H1 (cell line): ENCODE measurements at regions of chr20 and their contacts with region 1.

Region 1: DNA sequence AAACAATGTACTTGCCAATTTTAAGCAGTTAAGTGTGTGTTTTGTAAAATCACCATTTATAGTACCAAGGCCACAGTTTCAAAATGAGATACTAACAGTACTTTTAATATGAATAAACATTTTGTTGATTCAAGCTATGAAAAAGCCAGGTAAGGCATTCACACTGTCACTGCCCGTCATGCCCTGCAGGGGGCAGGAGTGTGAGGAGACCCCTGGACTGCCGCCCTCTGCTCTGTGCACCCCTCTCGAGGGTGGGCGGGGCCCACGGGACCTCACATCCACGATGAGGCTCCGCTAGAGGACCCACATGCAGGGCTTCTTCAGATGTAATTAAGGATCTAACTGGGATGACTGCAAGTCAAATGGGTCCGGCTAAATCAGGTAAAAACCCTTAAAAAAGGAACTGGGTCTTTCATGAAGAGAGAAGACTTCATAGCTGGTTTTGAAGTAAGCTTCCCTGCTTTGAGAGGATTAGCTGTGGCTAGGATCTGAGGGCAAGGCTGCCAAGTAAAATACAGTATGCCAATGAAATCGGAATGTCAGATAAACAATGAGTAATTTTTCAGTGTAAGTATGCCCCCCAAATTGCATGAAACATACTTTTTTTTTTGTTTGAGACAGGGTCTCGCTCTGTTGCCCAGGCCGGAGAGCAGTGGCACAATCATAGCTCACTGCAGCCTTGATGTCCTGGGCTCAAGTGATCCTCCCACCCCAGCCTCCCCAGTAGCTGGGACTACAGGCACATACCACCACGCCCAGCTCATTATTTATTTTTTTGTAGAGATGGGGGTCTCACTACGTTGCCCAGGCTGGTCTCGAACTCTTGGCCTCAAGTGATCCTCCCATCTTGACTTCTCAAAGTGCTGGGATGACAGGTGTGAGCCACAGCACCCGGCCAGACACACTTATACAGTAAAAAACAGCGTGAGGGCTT is 18.7 kb downstream of the DIDO1 start:
- DNase-seq: no peak
- H3K4me3 ChIP-seq: no peak overlapping the region
- H3K27ac ChIP-seq: no peak overlapping the region
- H3K4me1 ChIP-seq: no peaks in the 10 kb centered on the region; a peak in 2 of 7 replicates
- H3K27me3 ChIP-seq: no peaks in the 10 kb centered on the region
- CTCF ChIP-seq: peak; percentile 42 to 81 (median 73); a peak in 3 of 4 replicates
- EP300 ChIP-seq: no peak
- POLR2A ChIP-seq: no peak
- RAD21 ChIP-seq: peak; percentile 47 to 52

Region 2: GRCh38 chr20:62887147-62887859 is 20.3 kb before region 1 on chr20:
- CTCF ChIA-PET with region 1: interaction called, 13 read pairs
- POLR2A ChIA-PET with region 1: interaction called, 88 read pairs
- DNase-seq: no peak
- H3K4me3 ChIP-seq: no peak overlapping the region
- H3K27ac ChIP-seq: no peak overlapping the region
- H3K4me1 ChIP-seq: peaks cover 0 to 19% (median 9%) of the 10 kb centered on the region in 4 experiments; a peak in 5 of 7 replicates
- H3K27me3 ChIP-seq: no peaks in the 10 kb centered on the region
- CTCF ChIP-seq: no peak
- EP300 ChIP-seq: no peak
- POLR2A ChIP-seq: no peak
- RAD21 ChIP-seq: no peak

Region 3: DNA sequence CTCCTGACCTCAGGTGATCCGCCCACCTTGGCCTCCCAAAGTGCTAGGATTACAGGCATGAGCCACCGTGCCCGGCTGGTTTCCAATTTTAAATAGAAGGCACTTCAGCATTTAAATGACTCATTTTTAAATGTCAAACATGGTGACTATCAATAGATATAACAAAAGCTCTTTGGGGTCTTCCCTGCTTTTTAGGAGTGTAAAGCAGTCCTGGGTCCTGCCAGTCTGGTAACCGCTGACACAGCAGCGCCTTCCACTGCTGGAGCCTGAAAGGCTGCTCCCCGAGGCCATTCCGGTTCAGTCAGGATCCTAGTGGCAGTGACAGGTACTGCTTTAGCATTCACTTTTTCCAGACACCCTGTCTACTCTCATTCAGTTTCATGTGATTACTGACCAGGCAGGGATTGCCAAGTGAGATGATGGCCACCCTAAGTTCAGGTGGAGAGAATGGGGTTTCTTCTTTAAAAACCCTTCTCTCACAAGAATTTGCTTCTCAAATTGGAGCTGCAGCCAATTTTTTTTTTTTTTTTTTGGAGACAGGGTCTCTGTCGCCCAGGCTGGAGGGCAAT is 13.6 kb after region 1 on chr20:
- CTCF ChIA-PET with region 1: interaction called, 58 read pairs
- POLR2A ChIA-PET with region 1: interaction called, 156 read pairs
- DNase-seq: no peak
- H3K4me3 ChIP-seq: no peak overlapping the region
- H3K27ac ChIP-seq: no peak overlapping the region
- H3K4me1 ChIP-seq: peaks cover 12 to 50% (median 41%) of the 10 kb centered on the region in 4 experiments; a peak in 6 of 7 replicates
- H3K27me3 ChIP-seq: no peaks in the 10 kb centered on the region
- CTCF ChIP-seq: peak; percentile 52 to 72 (median 71)
- EP300 ChIP-seq: no peak
- POLR2A ChIP-seq: no peak
- RAD21 ChIP-seq: peak; percentile 28 to 46; a peak in 2 of 4 replicates

Region 4: GRCh38 chr20:62937366-62938104 is 29.9 kb after region 1 on chr20:
- CTCF ChIA-PET with region 1: interaction called, 19 read pairs
- POLR2A ChIA-PET with region 1: interaction called, 363 read pairs
- DNase-seq: peak; percentile 91 to 96
- H3K4me3 ChIP-seq: peak overlapping the region; percentile 89 to 98 (median 94)
- H3K27ac ChIP-seq: peak overlapping the region; percentile 95
- H3K4me1 ChIP-seq: peaks cover 3 to 21% (median 11%) of the 10 kb centered on the region in 4 experiments
- H3K27me3 ChIP-seq: no peaks in the 10 kb centered on the region
- CTCF ChIP-seq: no peak
- EP300 ChIP-seq: no peak
- POLR2A ChIP-seq: peak; percentile 92 to 95; a peak in 2 of 3 replicates
- RAD21 ChIP-seq: no peak

Region 5: DNA sequence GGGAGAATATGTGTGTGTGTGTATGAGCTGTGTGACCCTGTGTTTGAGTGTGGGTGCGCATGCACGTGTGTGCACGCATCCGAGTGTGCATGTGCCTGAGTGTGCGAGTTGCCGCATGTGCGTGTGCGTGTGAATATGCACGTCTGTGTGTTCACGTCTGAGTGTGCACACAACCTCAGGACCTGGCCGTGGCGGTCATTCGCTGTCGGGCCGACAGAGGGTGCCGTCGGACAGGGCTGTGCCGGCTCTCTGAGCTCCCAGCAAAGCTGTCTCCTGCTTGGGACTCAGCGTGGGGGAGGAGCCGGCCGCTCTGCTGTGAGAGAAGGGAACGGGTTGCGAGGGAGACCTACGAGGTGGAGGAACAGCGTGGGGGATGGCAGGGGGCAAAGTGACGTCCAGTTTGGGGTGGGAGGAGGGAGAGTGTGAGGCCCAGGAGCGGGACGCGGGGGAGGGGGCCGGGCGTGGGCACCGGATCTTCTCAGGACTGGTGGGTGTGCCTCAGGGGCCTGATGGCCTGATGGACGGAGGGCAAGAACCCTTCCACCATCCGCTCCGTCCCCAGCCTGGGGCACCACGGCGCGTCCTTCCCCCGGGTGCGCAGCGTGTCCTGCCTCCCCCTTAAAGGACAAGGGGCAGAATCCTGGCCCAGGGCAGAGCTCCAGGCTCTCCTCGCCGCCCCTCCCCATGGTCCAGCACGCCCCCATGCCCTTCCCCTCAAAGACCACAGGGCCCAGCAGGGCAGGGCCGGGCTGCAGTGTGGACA is 64.8 kb after region 1 on chr20:
- CTCF ChIA-PET with region 1: interaction called, 10 read pairs
- POLR2A ChIA-PET with region 1: interaction called, 3 read pairs
- DNase-seq: peak; percentile 38 to 97
- H3K4me3 ChIP-seq: peak overlapping the region; percentile 13 to 55 (median 24); a peak in 6 of 8 replicates
- H3K27ac ChIP-seq: no peak overlapping the region
- H3K4me1 ChIP-seq: peaks cover 2 to 20% (median 11%) of the 10 kb centered on the region in 4 experiments
- H3K27me3 ChIP-seq: peaks cover 8 to 37% (median 23%) of the 10 kb centered on the region in 4 experiments
- CTCF ChIP-seq: peak; percentile 93 to 98 (median 96)
- EP300 ChIP-seq: no peak
- POLR2A ChIP-seq: no peak
- RAD21 ChIP-seq: peak; percentile 98